GM23248 (cell line): ENCODE measurements at regions of chr1 and their contacts with region 1.

Region 1: DNA sequence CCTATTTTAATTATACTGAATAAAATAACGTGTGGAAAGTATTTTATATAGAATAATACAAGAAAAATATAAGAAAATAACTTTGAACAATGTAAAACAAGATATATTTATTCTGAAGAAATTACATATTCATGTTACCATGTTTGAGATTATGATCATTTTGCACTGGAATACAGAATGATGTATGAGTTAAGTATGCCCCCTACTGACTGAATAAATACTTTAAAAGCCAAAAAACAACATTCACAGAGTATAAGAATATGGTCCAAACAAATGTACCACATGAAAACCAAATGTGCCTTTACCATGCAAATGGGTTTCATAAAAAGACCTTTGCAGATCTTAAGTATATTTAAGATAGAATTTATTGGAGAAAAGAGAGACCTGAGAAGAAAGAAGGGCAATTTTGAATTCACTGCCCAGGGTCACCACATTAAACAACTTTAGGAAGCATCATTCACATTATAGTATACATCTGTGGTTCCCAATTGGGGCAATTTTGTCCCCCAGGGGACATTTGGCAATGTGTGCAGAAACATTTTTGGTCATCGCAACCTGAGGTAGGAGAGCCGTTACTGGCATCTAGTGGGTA is 136.6 kb upstream of the GFI1 start:
- DNase-seq: peak; percentile 44
- H3K4me3 ChIP-seq: no peak overlapping the region
- H3K27ac ChIP-seq: no peak overlapping the region
- H3K4me1 ChIP-seq: no peaks in the 10 kb centered on the region
- H3K27me3 ChIP-seq: no peaks in the 10 kb centered on the region

Region 2: DNA sequence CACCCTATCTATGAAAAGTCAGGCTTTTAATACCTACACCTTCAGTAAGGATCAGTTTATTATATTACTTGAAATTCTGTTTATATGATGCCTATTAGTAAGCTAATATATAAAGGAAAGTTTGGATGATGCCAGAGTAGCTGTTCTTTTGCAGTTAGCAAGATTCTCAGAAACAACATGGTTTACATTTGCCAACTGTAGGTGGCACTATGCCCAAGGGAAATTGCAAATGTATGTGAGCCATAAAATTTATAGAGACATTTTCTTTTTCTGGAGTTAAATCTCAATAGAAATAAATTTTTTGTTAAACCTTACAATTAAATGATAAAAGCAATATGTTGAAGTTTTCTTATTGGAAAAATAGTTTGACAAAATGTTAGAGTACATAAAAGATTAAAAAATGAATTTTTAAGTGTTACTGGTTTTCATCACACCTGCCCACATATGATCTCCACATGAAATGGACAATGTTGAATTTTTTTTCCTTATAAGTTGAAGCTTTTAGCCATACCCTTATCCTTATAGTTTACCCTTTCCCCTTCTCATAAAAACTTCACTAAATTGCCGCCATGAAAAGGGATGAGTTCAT is 625.6 kb before region 1 on chr1:
- in situ Hi-C with region 1: loop called (anchors 25 kb)
- DNase-seq: peak; percentile 65
- H3K4me3 ChIP-seq: no peak overlapping the region
- H3K27ac ChIP-seq: no peak overlapping the region
- H3K4me1 ChIP-seq: no peaks in the 10 kb centered on the region
- H3K27me3 ChIP-seq: no peaks in the 10 kb centered on the region

Region 3: DNA sequence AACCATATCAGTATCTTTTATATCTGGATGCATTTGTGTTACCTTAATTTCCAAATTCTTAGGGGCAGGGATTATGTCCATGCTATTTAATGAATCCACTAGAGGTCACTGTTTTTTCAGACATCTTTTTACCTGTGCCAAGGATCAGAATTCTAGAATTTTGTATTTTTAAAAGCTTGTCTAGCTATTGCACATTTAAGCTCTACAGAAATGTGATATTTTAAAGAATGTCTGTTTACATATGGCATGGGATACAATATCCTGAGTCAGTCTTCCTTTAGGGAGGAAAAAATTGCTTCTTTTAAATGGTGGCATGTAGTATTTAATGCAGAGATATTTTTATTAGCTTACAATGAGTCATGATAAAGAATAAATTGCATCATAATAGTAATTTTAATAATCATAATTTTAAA is 313.1 kb before region 1 on chr1:
- in situ Hi-C with region 1: loop called (anchors 25 kb)
- DNase-seq: peak; percentile 61
- H3K4me3 ChIP-seq: no peak overlapping the region
- H3K27ac ChIP-seq: no peak overlapping the region
- H3K4me1 ChIP-seq: no peaks in the 10 kb centered on the region
- H3K27me3 ChIP-seq: no peaks in the 10 kb centered on the region